ENCODE measurements at regions of chr1 and their contacts with region 1.

Region 1: DNA sequence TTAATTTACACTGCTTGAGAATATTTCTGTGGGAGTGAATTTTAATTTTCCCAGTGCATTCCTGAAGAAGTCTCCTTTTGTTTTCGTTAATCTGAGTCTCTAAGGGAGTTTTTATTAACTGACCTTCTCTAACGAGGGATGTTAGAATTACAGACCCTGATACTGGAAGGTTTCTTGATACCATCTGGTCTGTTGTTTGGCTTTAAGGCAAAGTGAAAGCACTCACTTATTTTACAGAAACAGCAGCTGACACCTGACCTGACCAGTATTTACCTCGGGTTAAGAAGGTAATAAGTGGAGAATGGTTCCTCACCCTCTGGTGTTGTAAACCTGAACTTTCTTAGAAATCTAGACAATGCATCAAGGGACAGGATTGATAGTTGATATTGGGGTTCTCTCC is 12.4 kb downstream of the CDC14A start:
- DNase-seq: no peak
- ATAC-seq: no peak
- H3K4me3 ChIP-seq: no peak overlapping the region
- H3K27ac ChIP-seq: no peak overlapping the region
- H3K4me1 ChIP-seq: no peaks in the 10 kb centered on the region
- H3K27me3 ChIP-seq: no peaks in the 10 kb centered on the region
- CTCF ChIP-seq: no peak
- POLR2A ChIP-seq: no peak
- RAD21 ChIP-seq: no peak

Region 2: DNA sequence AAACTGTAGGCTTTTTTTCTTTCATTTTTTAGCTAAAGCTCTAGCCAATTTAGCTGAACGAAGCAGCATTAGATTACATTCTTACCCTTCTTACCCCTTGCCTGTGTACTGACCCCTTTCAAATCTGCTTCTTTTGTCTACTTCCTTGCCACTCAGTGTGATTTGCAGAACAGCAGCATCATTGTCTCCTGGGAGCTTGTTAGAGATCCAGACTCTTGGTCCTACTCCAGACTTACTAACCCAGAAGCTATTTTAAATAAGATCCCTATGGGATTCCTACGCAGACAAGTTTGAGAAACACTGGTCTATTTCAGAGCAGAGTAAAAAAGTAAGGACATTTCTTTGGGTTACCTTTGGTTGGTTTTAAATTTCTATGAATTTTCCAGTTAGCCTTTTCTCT is 200.5 kb before region 1 on chr1:
- CTCF ChIA-PET with region 1: no interaction called
- POLR2A ChIA-PET with region 1: no interaction called
- dilution Hi-C with region 1: no loop called
- in situ Hi-C with region 1: no loop called
- intact Hi-C with region 1: no loop called
- DNase-seq: peak; percentile 67
- ATAC-seq: peak; percentile 74
- H3K4me3 ChIP-seq: no peak overlapping the region
- H3K27ac ChIP-seq: no peak overlapping the region
- H3K4me1 ChIP-seq: no peaks in the 10 kb centered on the region
- H3K27me3 ChIP-seq: no peaks in the 10 kb centered on the region
- CTCF ChIP-seq: no peak
- POLR2A ChIP-seq: no peak
- RAD21 ChIP-seq: no peak

Region 3: GRCh38 chr1:100322436-100323211 is 42.1 kb before region 1 on chr1:
- CTCF ChIA-PET with region 1: no interaction called
- POLR2A ChIA-PET with region 1: no interaction called
- dilution Hi-C with region 1: no loop called
- in situ Hi-C with region 1: no loop called
- intact Hi-C with region 1: no loop called
- DNase-seq: peak; percentile 31
- ATAC-seq: no peak
- H3K4me3 ChIP-seq: no peak overlapping the region
- H3K27ac ChIP-seq: no peak overlapping the region
- H3K4me1 ChIP-seq: no peaks in the 10 kb centered on the region; the same call in 1 of the 2 replicates
- H3K27me3 ChIP-seq: peaks cover 2% of the 10 kb centered on the region; the same call in 1 of the 2 replicates
- CTCF ChIP-seq: no peak
- POLR2A ChIP-seq: no peak
- RAD21 ChIP-seq: no peak

Region 4: GRCh38 chr1:100443811-100444571 is 79.3 kb after region 1 on chr1:
- CTCF ChIA-PET with region 1: no interaction called
- POLR2A ChIA-PET with region 1: no interaction called
- dilution Hi-C with region 1: no loop called
- in situ Hi-C with region 1: no loop called
- intact Hi-C with region 1: loop called (anchors 5 kb)
- DNase-seq: peak; percentile 86
- ATAC-seq: peak; percentile 89
- H3K4me3 ChIP-seq: no peak overlapping the region
- H3K27ac ChIP-seq: no peak overlapping the region
- H3K4me1 ChIP-seq: peaks cover 4% of the 10 kb centered on the region; the same call in 1 of the 2 replicates
- H3K27me3 ChIP-seq: no peaks in the 10 kb centered on the region
- CTCF ChIP-seq: no peak
- POLR2A ChIP-seq: no peak
- RAD21 ChIP-seq: no peak

Measured in IMR-90 (cell line).